Activated CD8-positive, alpha-beta T cell treated with anti-CD3 and anti-CD28 coated beads, Interleukin-2, amount 10 ng/mL, durations not matched to agents 7 days and 5 days (primary cell): ENCODE measurements at regions of chr5 and their contacts with region 1.

Region 1: DNA sequence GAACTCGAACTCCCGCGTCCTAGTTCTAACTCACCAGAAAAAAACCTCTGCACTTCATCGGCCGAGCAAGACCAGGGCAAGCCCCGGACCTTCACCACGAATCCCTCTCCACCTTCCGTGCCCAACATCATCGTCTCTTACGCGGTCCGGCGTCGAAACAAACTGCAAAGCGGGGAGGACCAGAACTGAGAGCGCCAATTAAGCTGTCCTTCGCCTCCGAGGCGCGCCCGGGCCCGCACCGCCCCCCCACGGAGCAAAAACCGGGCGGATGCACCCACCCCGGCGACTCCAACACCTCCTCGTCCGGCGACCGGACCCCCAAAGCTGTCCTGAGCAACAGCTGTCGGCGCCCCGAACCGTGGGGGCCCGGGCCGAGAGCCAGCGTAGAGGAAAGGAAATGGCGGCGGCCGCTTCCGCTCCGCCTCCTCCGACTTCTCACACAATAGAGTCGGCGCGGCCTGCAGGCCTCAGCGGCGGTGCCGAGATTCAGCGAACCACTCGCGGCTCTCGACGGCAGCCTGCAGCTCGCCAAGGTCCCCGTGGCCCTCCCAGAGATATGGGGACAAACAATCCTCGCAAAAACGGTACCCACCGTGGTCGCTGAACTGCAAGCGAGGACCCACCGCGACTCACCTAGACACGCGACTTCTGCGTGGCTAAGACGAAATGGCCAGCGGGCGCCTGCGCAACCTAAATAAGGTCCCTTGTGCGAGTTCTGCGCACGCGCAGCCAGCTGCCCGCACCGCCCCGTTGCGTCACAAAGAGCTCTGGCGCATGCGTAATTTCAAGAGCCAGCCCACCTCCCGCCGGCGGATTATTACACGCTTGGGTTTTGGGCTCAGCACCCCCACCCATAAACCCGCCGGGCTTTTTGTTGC is at the start of gene HNRNPH1:
- DNase-seq: peak; percentile 99
- ATAC-seq: peak; percentile 73
- H3K4me3 Mint-ChIP-seq: peak within 1 kb of the TSS; percentile 92
- H3K27ac Mint-ChIP-seq: peak within 1 kb of the TSS; percentile 99
- H3K4me1 Mint-ChIP-seq: peaks cover 34% of the 10 kb centered on the region
- H3K27me3 Mint-ChIP-seq: no peaks in the 10 kb centered on the region
- total RNA-seq, gene HNRNPH1: 869 to 884 TPM

Region 2: GRCh38 chr5:179550511-179551230 is 72.6 kb before region 1 on chr5 and contains the start of gene RUFY1:
- CTCF ChIA-PET with region 1: interaction called, 6 read pairs
- POLR2A ChIA-PET with region 1: interaction called, 37 read pairs
- DNase-seq: peak; percentile 82
- ATAC-seq: peak; percentile 89
- H3K4me3 Mint-ChIP-seq: peak within 1 kb of the TSS; percentile 94
- H3K27ac Mint-ChIP-seq: peak within 1 kb of the TSS; percentile 97
- H3K4me1 Mint-ChIP-seq: peaks cover 34% of the 10 kb centered on the region
- H3K27me3 Mint-ChIP-seq: no peaks in the 10 kb centered on the region
- total RNA-seq, gene RUFY1: 43.4 to 46.3 TPM

Region 3: GRCh38 chr5:179608131-179608581 is 15.1 kb before region 1 on chr5:
- CTCF ChIA-PET with region 1: interaction called, 6 read pairs
- POLR2A ChIA-PET with region 1: interaction called, 158 read pairs
- DNase-seq: peak; percentile 87
- ATAC-seq: peak; percentile 70
- H3K4me3 Mint-ChIP-seq: no peak overlapping the region
- H3K27ac Mint-ChIP-seq: peak overlapping the region; percentile 87
- H3K4me1 Mint-ChIP-seq: peaks cover 52% of the 10 kb centered on the region
- H3K27me3 Mint-ChIP-seq: no peaks in the 10 kb centered on the region

Region 4: DNA sequence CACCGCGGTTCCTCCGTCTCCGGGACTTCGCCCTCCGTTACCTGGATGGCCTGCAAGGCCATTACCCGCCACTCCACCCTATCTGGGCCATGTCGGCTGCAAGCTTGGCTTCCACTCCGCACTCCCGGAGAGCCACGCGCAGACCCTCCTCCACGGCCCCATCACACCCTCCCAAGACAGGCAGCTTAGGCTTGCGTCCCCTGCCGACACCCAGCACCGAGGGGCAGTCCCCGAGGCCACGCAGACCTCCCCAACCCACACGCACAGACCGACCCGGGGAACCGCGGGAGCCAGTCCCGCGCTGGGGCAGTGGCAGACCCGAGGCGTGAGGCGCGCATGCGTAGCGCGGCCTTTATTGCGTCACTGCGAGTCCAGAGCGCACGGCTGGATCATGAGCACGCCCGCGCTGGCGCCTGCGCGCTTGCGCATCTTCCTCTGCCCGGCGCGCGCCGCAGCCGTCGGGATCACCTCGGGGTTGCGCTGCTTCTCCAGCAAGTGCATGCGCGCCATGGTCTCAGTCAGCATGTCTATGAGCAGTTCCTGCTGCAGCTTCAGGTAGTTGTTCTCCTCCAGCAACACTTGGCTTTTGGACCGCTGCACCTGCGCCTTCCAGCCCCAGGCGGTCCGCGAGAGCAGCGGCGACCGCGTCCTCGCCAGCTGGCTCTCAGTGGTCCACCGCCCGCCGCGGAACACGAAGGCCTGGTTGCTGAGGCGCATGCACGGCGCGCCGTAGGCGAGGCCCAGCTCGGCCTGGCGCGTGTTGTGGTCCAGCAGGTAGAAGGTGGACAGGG is 55.2 kb after region 1 on chr5:
- CTCF ChIA-PET with region 1: no interaction called
- POLR2A ChIA-PET with region 1: interaction called, 45 read pairs
- DNase-seq: peak; percentile 96
- ATAC-seq: peak; percentile 91
- H3K4me3 Mint-ChIP-seq: peak overlapping the region; percentile 95
- H3K27ac Mint-ChIP-seq: peak overlapping the region; percentile 97
- H3K4me1 Mint-ChIP-seq: peaks cover 35% of the 10 kb centered on the region
- H3K27me3 Mint-ChIP-seq: no peaks in the 10 kb centered on the region

Region 5: GRCh38 chr5:179697993-179698934 is 75.0 kb after region 1 on chr5:
- CTCF ChIA-PET with region 1: interaction called, 5 read pairs
- POLR2A ChIA-PET with region 1: interaction called, 23 read pairs
- DNase-seq: peak; percentile 99
- ATAC-seq: peak; percentile 92
- H3K4me3 Mint-ChIP-seq: peak overlapping the region; percentile 89
- H3K27ac Mint-ChIP-seq: peak overlapping the region; percentile 94
- H3K4me1 Mint-ChIP-seq: peaks cover 32% of the 10 kb centered on the region
- H3K27me3 Mint-ChIP-seq: no peaks in the 10 kb centered on the region

Region 6: DNA sequence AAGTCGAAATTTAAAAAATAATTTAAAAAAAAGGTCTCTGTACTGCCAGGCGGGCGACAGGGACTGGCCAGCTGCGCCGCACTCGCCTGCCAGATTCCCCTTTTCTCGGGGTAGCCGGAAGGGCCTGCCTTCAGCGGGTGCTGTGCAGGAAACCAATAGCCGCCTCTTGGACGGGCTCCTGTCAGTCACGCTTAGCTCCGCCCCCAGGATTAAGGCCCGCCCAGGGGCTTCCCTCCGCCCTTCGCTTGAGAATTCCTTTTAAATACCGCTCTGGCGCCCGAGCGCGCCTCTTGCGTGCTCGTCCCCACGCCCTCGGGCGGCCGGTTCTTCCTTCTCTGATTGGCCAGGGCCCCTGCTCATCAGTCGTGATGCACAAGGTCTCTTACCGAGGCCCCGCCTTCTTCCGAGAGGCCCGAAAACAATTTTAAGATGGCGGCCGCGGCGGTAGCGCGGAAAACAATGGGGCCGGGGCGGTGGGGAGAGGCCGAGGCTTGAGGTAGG is 109.2 kb after region 1 on chr5 and contains the start of gene MAML1:
- CTCF ChIA-PET with region 1: interaction called, 3 read pairs
- POLR2A ChIA-PET with region 1: interaction called, 33 read pairs
- DNase-seq: peak; percentile 100
- ATAC-seq: peak; percentile 98
- H3K4me3 Mint-ChIP-seq: peak within 1 kb of the TSS; percentile 97
- H3K27ac Mint-ChIP-seq: peak within 1 kb of the TSS; percentile 90
- H3K4me1 Mint-ChIP-seq: peaks cover 33% of the 10 kb centered on the region
- H3K27me3 Mint-ChIP-seq: no peaks in the 10 kb centered on the region
- total RNA-seq, gene MAML1: 28.9 to 30.0 TPM

Region 7: GRCh38 chr5:179821581-179822432 is 198.6 kb after region 1 on chr5:
- CTCF ChIA-PET with region 1: no interaction called
- POLR2A ChIA-PET with region 1: interaction called, 13 read pairs
- DNase-seq: peak; percentile 91
- ATAC-seq: peak; percentile 73
- H3K4me3 Mint-ChIP-seq: peak overlapping the region; percentile 91
- H3K27ac Mint-ChIP-seq: peak overlapping the region; percentile 97
- H3K4me1 Mint-ChIP-seq: peaks cover 56% of the 10 kb centered on the region
- H3K27me3 Mint-ChIP-seq: no peaks in the 10 kb centered on the region